ENCODE measurements at regions of chr17 and their contacts with region 1.

Region 1: DNA sequence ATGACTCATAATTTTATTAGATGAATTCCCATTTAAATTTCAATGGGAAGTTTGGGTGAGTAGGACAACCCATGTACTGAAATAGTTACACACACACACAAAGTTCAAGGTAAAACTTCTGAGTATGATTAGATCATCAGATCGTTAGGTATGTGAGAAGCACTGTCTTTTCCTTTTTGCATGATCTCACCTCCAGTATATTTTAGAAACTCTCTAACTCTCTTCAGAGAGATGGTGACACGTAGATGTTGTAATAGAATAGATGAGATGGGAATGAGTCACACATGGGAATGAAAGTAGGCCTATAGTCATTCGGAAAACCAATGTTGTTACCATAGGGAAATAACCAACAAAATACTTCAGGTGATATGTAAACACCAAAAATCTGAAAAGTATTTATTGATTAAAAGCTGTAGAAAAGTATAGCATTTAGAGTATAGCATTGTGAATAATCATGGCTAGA is 22.2 kb downstream of the KRT23 start:
- DNase-seq: peak; percentile 94
- ATAC-seq: peak; percentile 84
- H3K4me3 ChIP-seq: no peak overlapping the region
- H3K27ac ChIP-seq: peak overlapping the region; percentile 98
- H3K4me1 ChIP-seq: peaks cover 57% of the 10 kb centered on the region
- H3K27me3 ChIP-seq: no peaks in the 10 kb centered on the region
- CTCF ChIP-seq: no peak

Region 2: DNA sequence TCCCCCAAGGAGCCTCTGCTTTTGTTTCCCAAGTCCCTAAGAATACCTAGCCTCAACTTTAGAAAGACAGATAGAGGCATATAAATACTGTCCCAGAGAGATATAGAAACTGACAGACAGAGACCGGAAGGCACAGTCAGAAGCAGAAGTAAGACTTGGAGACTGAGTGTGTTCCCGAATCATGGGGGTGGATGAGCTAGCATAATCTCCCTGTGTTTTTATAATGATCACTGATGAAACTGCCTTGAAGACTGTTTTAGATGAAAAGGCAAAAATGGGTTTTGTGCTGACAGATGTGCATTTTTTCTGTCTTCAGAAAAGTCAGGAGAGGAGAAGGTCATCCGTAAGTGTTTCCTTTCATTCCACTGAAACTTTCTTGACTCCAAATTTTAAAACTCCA is 943.0 kb before region 1 on chr17:
- CTCF ChIA-PET with region 1: no interaction called
- POLR2A ChIA-PET with region 1: no interaction called
- intact Hi-C with region 1: no loop called
- DNase-seq: no peak
- ATAC-seq: no peak
- H3K4me3 ChIP-seq: no peak overlapping the region
- H3K27ac ChIP-seq: no peak overlapping the region
- H3K4me1 ChIP-seq: no peaks in the 10 kb centered on the region
- H3K27me3 ChIP-seq: no peaks in the 10 kb centered on the region
- CTCF ChIP-seq: no peak

Region 3: GRCh38 chr17:40956401-40957254 is 41.4 kb after region 1 on chr17:
- CTCF ChIA-PET with region 1: no interaction called
- POLR2A ChIA-PET with region 1: no interaction called
- intact Hi-C with region 1: loop called (anchors 1 kb)
- DNase-seq: peak; percentile 96
- ATAC-seq: peak; percentile 89
- H3K4me3 ChIP-seq: peak overlapping the region; percentile 4; the same call in 1 of the 2 replicates
- H3K27ac ChIP-seq: peak overlapping the region; percentile 92
- H3K4me1 ChIP-seq: peaks cover 70% of the 10 kb centered on the region
- H3K27me3 ChIP-seq: no peaks in the 10 kb centered on the region
- CTCF ChIP-seq: no peak

Region 4: GRCh38 chr17:41008805-41009204 is 93.6 kb after region 1 on chr17 and contains the start of gene KRTAP3-1:
- CTCF ChIA-PET with region 1: no interaction called
- POLR2A ChIA-PET with region 1: no interaction called
- intact Hi-C with region 1: loop called (anchors 10 kb)
- DNase-seq: no peak
- ATAC-seq: no peak
- H3K4me3 ChIP-seq: no peak within 1 kb of the TSS
- H3K27ac ChIP-seq: peak within 1 kb of the TSS; percentile 28
- H3K4me1 ChIP-seq: peaks cover 40% of the 10 kb centered on the region
- H3K27me3 ChIP-seq: no peaks in the 10 kb centered on the region
- CTCF ChIP-seq: no peak
- total RNA-seq, gene KRTAP3-1: 1.6 TPM in 1 of 2 replicates, not detected in the other

Region 5: GRCh38 chr17:41131979-41132378 is 216.7 kb after region 1 on chr17:
- CTCF ChIA-PET with region 1: no interaction called
- POLR2A ChIA-PET with region 1: interaction called, 11 read pairs
- intact Hi-C with region 1: no loop called
- DNase-seq: peak; percentile 80
- ATAC-seq: peak; percentile 96
- H3K4me3 ChIP-seq: no peak overlapping the region
- H3K27ac ChIP-seq: peak overlapping the region; percentile 56
- H3K4me1 ChIP-seq: peaks cover 39% of the 10 kb centered on the region
- H3K27me3 ChIP-seq: no peaks in the 10 kb centered on the region
- CTCF ChIP-seq: no peak

Region 6: GRCh38 chr17:41211845-41212466 is 296.7 kb after region 1 on chr17:
- CTCF ChIA-PET with region 1: no interaction called
- POLR2A ChIA-PET with region 1: no interaction called
- intact Hi-C with region 1: loop called (anchors 10 kb)
- DNase-seq: peak; percentile 80
- ATAC-seq: peak; percentile 96
- H3K4me3 ChIP-seq: no peak overlapping the region
- H3K27ac ChIP-seq: peak overlapping the region; percentile 21; the same call in 1 of the 2 replicates
- H3K4me1 ChIP-seq: peaks cover 15% of the 10 kb centered on the region
- H3K27me3 ChIP-seq: no peaks in the 10 kb centered on the region
- CTCF ChIP-seq: no peak